ENCODE measurements at regions of chr21 and their contacts with region 1.

Region 1: GRCh38 chr21:22164912-22165311 is 1166.7 kb downstream of the NCAM2 start:
- DNase-seq: no peak
- H3K4me3 ChIP-seq: no peak overlapping the region
- H3K27ac ChIP-seq: no peak overlapping the region
- H3K4me1 ChIP-seq: no peaks in the 10 kb centered on the region
- H3K27me3 ChIP-seq: no peaks in the 10 kb centered on the region
- CTCF ChIP-seq: no peak
- POLR2A ChIP-seq: no peak

Region 2: GRCh38 chr21:21712748-21713520 is 452.0 kb before region 1 on chr21:
- intact Hi-C with region 1: no loop called
- DNase-seq: no peak
- H3K4me3 ChIP-seq: no peak overlapping the region
- H3K27ac ChIP-seq: no peak overlapping the region
- H3K4me1 ChIP-seq: no peaks in the 10 kb centered on the region
- H3K27me3 ChIP-seq: no peaks in the 10 kb centered on the region
- CTCF ChIP-seq: no peak
- POLR2A ChIP-seq: no peak

Region 3: DNA sequence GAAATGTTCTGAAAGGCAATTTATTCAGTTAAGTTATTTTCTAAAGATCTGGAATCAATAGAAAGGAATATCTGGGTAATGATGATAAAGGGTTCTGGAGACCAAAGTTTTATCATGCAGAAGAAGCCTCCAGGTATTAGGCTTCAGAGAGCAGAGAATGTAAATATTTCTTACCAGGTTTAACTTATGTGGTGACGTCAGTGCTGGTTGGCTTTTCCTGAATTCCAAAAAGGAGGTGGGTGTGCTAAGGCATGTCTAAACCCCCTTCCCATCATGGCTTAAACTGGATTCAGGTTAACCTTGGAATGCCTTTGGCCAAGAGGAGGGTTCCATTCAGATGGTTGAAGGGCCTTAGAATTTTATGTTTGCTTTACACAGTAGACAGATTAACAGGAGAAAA is 336.8 kb before region 1 on chr21:
- intact Hi-C with region 1: no loop called
- DNase-seq: no peak
- H3K4me3 ChIP-seq: no peak overlapping the region
- H3K27ac ChIP-seq: no peak overlapping the region
- H3K4me1 ChIP-seq: no peaks in the 10 kb centered on the region
- H3K27me3 ChIP-seq: no peaks in the 10 kb centered on the region
- CTCF ChIP-seq: no peak
- POLR2A ChIP-seq: no peak

Region 4: DNA sequence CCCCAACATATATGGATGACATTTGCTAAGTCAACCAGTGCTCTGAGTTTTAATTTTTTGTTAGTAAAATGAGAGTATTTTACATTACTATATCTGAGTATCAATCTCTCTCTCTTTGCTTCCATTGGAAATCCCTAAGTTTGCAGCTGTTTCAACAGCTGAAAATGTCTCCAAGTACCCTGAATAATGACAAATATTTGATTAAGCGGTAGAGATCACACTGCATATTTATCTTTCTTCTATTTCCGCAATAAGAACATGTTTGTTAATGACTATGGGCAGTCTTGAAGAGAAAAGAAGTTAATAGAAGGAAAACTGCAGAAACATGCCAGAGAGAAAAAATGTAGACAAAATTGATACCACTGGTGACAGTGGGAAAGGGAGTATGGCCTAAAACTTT is 49.2 kb before region 1 on chr21:
- intact Hi-C with region 1: loop called (anchors 2 kb)
- DNase-seq: no peak
- H3K4me3 ChIP-seq: no peak overlapping the region
- H3K27ac ChIP-seq: no peak overlapping the region
- H3K4me1 ChIP-seq: no peaks in the 10 kb centered on the region
- H3K27me3 ChIP-seq: no peaks in the 10 kb centered on the region
- CTCF ChIP-seq: no peak
- POLR2A ChIP-seq: no peak

Region 5: DNA sequence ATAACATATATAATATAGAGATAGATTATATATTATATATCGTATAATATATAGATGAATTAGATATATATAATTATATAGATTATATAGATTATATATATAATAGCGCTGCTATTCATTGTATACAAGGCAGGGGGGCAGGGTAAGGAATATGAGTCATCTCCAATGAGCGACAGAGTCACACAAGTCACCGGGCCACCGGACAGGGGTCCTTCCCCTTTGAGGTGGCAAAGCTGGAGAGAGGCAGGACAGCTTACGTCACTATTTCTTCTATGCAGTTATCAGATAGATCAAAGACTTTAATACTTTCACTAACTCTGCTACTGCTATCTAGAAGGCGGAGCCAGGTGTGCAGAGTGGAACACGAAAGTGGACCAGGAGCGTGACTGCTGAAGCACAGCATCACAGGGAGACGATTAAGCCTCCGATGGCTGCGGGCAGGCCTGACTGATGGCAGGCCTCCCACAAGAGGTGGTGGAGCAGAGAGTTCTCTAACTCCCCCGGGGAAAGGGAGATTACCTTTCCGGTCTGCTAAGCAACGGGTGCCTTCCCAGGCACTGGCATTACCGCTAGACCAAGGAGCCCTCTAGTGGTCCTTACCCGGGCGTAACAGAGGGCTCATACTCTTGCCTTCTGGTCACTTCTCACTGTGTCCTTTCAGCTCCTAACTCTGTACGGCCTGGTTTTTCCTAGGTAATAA is 1287.6 kb after region 1 on chr21:
- intact Hi-C with region 1: no loop called
- DNase-seq: no peak
- H3K4me3 ChIP-seq: peak overlapping the region in 1 of 3 donors; percentile 44
- H3K27ac ChIP-seq: no peak overlapping the region
- H3K4me1 ChIP-seq: no peaks in the 10 kb centered on the region
- H3K27me3 ChIP-seq: no peaks in the 10 kb centered on the region
- CTCF ChIP-seq: no peak
- POLR2A ChIP-seq: no peak

Measured in breast epithelium (tissue), 4 donors.